PC-9 (cell line): ENCODE measurements at regions of chr3 and their contacts with region 1.

Region 1: DNA sequence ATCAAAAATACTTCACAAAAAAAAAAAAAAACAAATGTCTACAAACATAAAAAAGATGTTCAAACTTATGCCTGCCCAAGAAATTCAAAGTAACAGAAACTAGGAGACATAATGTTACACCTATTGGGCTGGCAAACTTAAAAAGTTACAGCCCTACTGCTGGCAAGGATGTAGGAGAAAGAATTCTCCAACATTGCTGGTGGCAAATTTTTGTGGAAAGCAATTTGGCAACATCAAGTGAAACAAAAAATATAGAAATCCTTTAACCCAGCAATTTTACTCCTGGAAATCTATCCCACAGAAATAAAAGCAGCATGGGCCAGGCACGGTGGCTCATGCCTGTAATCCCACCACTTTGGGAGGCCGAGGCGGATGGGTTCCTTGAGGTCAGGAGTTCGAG is 73.2 kb downstream of the STAG1 start:
- DNase-seq: no peak
- H3K4me3 ChIP-seq: no peak overlapping the region
- H3K27ac ChIP-seq: no peak overlapping the region
- H3K4me1 ChIP-seq: no peaks in the 10 kb centered on the region
- H3K27me3 ChIP-seq: no peaks in the 10 kb centered on the region
- CTCF ChIP-seq: no peak

Region 2: GRCh38 chr3:136532766-136533165 is 146.2 kb before region 1 on chr3:
- CTCF ChIA-PET with region 1: interaction called, 11 read pairs
- POLR2A ChIA-PET with region 1: no interaction called
- intact Hi-C with region 1: no loop called
- DNase-seq: no peak
- H3K4me3 ChIP-seq: no peak overlapping the region
- H3K27ac ChIP-seq: no peak overlapping the region
- H3K4me1 ChIP-seq: no peaks in the 10 kb centered on the region
- H3K27me3 ChIP-seq: no peaks in the 10 kb centered on the region
- CTCF ChIP-seq: no peak

Region 3: GRCh38 chr3:136728918-136729317 is 49.9 kb after region 1 on chr3:
- CTCF ChIA-PET with region 1: no interaction called
- POLR2A ChIA-PET with region 1: no interaction called
- intact Hi-C with region 1: no loop called
- DNase-seq: no peak
- H3K4me3 ChIP-seq: no peak overlapping the region
- H3K27ac ChIP-seq: no peak overlapping the region
- H3K4me1 ChIP-seq: no peaks in the 10 kb centered on the region
- H3K27me3 ChIP-seq: no peaks in the 10 kb centered on the region
- CTCF ChIP-seq: no peak

Region 4: GRCh38 chr3:137171829-137172603 is 493.0 kb after region 1 on chr3:
- CTCF ChIA-PET with region 1: no interaction called
- POLR2A ChIA-PET with region 1: no interaction called
- intact Hi-C with region 1: no loop called
- DNase-seq: no peak
- H3K4me3 ChIP-seq: no peak overlapping the region
- H3K27ac ChIP-seq: no peak overlapping the region
- H3K4me1 ChIP-seq: no peaks in the 10 kb centered on the region
- H3K27me3 ChIP-seq: no peaks in the 10 kb centered on the region
- CTCF ChIP-seq: no peak